ENCODE measurements at regions of chr16 and their contacts with region 1.

Region 1: DNA sequence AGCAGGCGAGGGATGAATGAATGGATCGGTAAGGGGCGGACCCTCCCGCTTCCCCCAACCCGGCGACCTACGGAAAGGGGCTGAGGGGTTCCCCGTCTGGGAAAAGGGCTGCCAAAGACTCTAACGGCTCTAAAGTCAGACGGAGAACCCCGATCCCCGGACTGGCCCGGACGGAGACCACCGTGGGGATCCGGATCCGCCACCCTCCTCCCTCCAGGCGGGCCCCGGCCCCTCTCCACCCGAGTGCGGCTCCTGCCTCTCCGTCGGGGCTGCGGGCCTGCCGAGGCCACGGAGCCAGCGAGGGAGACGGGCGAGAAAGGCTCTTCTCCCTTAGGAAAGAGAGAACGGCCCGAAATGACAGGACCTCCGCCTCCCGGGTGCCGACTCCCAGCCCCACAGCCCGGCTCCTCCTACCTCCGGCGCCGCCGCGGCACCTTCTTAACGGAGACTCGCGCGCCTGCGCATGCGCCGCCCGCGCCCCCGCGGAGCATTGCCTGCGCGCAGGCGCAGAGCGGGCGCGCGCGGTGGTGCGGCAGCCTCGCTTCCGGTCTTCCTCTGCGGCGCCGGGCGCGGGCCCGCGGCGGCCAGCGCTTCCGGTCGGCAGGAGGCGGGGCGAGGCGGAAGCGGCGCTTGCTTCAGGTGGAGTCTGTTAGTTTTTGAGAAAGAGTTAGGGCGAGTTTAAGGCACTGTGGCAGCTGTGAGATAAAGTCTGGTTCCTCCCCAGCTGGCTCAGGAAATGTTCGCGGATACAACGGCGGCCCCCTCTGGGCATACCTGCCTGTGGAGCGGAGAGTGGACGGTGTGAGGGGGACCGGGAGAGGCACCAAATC is at the start of gene SLX4:
- DNase-seq: peak; percentile 88 to 94 (median 91)
- H3K4me3 ChIP-seq: peak within 1 kb of the TSS; percentile 82 to 97 (median 90)
- H3K4me3 Mint-ChIP-seq: peak within 1 kb of the TSS; percentile 99 to 100
- H3K27ac ChIP-seq: peak within 1 kb of the TSS; percentile 70 to 94
- H3K27ac Mint-ChIP-seq: peak within 1 kb of the TSS; percentile 96 to 99 (median 98)
- H3K4me1 ChIP-seq: peaks cover 29 to 33% of the 10 kb centered on the region in 2 donors
- H3K4me1 Mint-ChIP-seq: peaks cover 54% of the 10 kb centered on the region
- H3K27me3 ChIP-seq: no peaks in the 10 kb centered on the region
- H3K27me3 Mint-ChIP-seq: peaks cover 0 to 1% (median 0%) of the 10 kb centered on the region in 3 donors
- CTCF ChIP-seq: no peak
- polyA plus RNA-seq, gene SLX4: 0.12 to 2.4 (median 0.71) TPM

Region 2: GRCh38 chr16:3625911-3626732 is 14.8 kb after region 1 on chr16:
- intact Hi-C with region 1: no loop called
- DNase-seq: peak; percentile 33 to 72 (median 48)
- H3K4me3 ChIP-seq: peak overlapping the region in 1 of 3 experiments; percentile 30
- H3K4me3 Mint-ChIP-seq: peak overlapping the region; percentile 24 to 78
- H3K27ac ChIP-seq: peak overlapping the region; percentile 54 to 67
- H3K27ac Mint-ChIP-seq: peak overlapping the region; percentile 76 to 85 (median 81)
- H3K4me1 ChIP-seq: peaks cover 45 to 56% of the 10 kb centered on the region in 2 donors
- H3K4me1 Mint-ChIP-seq: peaks cover 64% of the 10 kb centered on the region
- H3K27me3 ChIP-seq: no peaks in the 10 kb centered on the region
- H3K27me3 Mint-ChIP-seq: no peaks in the 10 kb centered on the region
- CTCF ChIP-seq: no peak

Region 3: DNA sequence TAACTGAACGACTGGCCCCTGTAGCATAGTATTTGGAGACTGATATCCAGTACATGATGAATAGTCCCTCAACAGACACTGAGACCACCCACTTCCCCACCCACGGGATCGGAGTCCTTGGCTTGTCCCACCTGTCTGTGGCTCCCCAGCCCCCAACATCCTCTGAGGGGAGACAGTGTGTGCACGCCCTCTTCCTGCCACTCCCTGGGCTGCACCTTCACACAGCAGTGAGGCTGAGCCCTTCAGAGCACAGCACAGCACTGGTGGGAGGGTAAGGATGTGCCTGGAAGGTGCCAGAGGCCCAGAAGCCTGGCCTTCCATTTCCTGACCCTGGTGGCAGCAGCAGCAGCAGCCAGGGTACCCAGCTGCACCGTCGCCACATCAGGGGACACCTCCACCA is 54.1 kb after region 1 on chr16:
- intact Hi-C with region 1: no loop called
- DNase-seq: no peak
- H3K4me3 ChIP-seq: no peak overlapping the region
- H3K4me3 Mint-ChIP-seq: no peak overlapping the region
- H3K27ac ChIP-seq: no peak overlapping the region
- H3K27ac Mint-ChIP-seq: peak overlapping the region in 1 of 7 donors; percentile 11
- H3K4me1 ChIP-seq: no peaks in the 10 kb centered on the region
- H3K4me1 Mint-ChIP-seq: peaks cover 2% of the 10 kb centered on the region
- H3K27me3 ChIP-seq: no peaks in the 10 kb centered on the region
- H3K27me3 Mint-ChIP-seq: peaks cover 0 to 2% (median 0%) of the 10 kb centered on the region in 3 donors
- CTCF ChIP-seq: no peak

Region 4: DNA sequence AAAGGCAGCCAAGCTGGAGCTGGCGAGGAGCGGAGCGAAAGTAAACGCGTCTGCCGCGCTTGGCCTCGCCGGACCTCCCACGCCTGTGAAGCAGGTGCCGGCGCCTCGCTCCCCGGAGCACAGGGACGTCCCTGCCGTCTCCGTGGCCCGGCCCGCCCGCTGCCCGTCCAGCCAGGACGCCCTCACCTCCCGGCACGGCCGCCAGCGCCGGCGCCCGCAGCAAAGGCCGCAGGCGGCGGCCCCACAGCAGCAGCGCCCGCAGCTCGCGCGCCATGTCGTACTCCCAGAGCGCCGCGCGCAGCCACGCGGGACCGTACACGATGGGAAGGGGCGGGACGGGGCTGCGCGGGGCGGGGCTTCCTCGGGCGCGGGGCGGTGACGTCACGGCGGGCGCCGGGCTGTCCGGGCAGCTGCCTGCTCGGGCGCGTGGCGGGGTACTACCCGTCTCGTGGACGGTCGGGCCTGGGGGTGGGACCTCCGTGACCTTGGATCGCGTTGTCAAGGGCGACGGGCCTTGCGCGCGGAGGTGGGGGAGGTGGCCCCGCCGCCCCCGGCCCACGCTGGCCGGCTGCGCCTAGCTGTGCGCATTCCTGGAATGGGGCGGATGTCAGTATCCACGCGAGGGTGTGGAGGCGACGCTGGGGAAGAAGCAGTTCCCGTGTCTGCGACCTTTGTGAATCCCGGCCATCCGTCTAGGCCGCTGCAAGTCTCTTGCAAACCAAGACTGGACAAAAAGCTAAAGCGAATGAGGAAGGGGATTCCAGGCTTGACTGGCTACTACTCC is 106.1 kb after region 1 on chr16 and contains the start of gene TRAP1:
- intact Hi-C with region 1: loop called in 1 of 2 experiments (anchors 2 kb)
- DNase-seq: peak; percentile 79 to 88 (median 82)
- H3K4me3 ChIP-seq: peak within 1 kb of the TSS; percentile 84 to 90 (median 85)
- H3K4me3 Mint-ChIP-seq: peak within 1 kb of the TSS; percentile 85 to 91
- H3K27ac ChIP-seq: peak within 1 kb of the TSS; percentile 46 to 94
- H3K27ac Mint-ChIP-seq: peak within 1 kb of the TSS; percentile 84 to 95 (median 91)
- H3K4me1 ChIP-seq: peaks cover 15 to 19% of the 10 kb centered on the region in 2 donors
- H3K4me1 Mint-ChIP-seq: peaks cover 14% of the 10 kb centered on the region
- H3K27me3 ChIP-seq: no peaks in the 10 kb centered on the region
- H3K27me3 Mint-ChIP-seq: peaks cover 1 to 6% (median 3%) of the 10 kb centered on the region in 3 donors
- CTCF ChIP-seq: no peak
- polyA plus RNA-seq, gene TRAP1: 22.8 to 54.0 (median 22.9) TPM

Region 5: DNA sequence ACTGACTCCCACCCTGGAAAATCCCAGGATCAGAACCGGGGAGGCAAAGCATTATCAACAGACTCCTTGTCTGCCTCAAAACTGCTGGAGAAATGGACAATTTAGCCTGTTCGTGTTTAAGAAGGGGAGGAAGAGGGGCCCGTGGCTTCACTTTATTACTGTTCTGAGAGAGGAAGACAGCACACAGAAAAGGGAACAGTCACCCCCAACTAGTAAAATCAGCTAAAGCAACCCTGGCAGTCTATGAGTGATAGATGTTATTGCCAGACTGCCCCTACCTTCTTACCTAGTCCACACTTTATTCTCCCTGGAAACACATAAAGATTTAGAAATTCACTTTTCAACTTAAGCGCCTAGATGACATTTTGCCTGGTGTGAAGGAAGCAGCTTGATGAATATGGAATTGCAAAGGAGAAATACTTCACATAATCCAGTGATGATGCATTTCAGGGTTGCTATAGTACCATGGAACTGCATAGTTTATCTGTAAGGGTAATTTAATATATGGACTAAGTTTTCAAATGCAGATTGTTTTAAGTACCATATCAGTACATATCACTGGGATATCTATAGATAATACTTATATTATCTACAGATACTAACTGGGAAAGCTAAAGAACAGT is 142.8 kb after region 1 on chr16:
- intact Hi-C with region 1: no loop called
- DNase-seq: no peak
- H3K4me3 ChIP-seq: no peak overlapping the region
- H3K4me3 Mint-ChIP-seq: no peak overlapping the region
- H3K27ac ChIP-seq: no peak overlapping the region
- H3K27ac Mint-ChIP-seq: peak overlapping the region in 1 of 7 donors; percentile 13
- H3K4me1 ChIP-seq: no peaks in the 10 kb centered on the region
- H3K4me1 Mint-ChIP-seq: no peaks in the 10 kb centered on the region
- H3K27me3 ChIP-seq: no peaks in the 10 kb centered on the region
- H3K27me3 Mint-ChIP-seq: no peaks in the 10 kb centered on the region
- CTCF ChIP-seq: no peak

Region 6: GRCh38 chr16:4183237-4184036 is 572.1 kb after region 1 on chr16:
- intact Hi-C with region 1: loop called in 1 of 2 experiments (anchors 10 kb)
- DNase-seq: peak; percentile 84 to 91 (median 89)
- H3K4me3 ChIP-seq: peak overlapping the region; percentile 50 to 83 (median 53)
- H3K4me3 Mint-ChIP-seq: peak overlapping the region; percentile 78 to 83
- H3K27ac ChIP-seq: peak overlapping the region; percentile 69 to 78
- H3K27ac Mint-ChIP-seq: peak overlapping the region; percentile 82 to 95 (median 93)
- H3K4me1 ChIP-seq: peaks cover 21 to 38% of the 10 kb centered on the region in 2 donors
- H3K4me1 Mint-ChIP-seq: peaks cover 20% of the 10 kb centered on the region
- H3K27me3 ChIP-seq: peaks cover 25 to 50% of the 10 kb centered on the region in 2 donors
- H3K27me3 Mint-ChIP-seq: peaks cover 53 to 56% (median 55%) of the 10 kb centered on the region in 3 donors
- CTCF ChIP-seq: no peak